ENCODE measurements at regions of chr9 and their contacts with region 1.

Region 1: DNA sequence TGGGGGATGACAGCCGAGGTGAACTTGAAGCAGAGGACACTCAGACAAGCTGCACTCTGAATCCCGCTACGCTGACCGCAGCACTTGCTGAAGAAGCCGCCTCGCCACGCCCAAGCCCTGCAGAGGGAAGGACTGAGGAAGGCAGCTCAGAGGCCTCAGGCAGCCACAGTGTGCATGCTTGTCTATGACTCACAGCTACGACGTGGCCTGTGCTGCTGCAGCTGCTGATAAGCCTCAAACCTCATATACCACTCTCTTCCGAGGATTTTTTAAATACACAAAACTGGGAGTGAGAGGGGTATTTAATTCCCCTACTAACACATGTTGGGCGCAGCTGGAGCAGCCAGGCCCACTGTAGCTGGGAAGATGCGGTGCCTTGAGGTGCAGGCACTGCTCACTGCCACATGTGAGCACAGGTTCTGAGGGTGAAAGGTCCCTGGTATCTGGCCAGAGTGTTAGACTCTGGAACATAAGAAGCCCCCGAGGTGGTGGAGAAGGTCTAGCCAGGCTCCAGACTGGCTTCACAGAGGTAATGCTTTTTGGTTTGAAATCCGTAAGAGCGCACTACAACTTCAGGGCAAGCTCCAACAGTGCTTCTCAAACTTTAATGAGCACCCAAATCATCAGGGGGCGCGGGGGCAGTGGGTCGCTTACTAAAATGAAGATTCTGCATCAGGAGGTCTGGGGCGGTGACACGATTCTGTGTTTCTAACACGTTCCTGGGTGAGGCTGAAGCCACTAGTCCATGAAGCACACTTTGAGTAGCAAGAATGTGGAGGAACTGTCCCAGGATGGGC is 196.8 kb downstream of the AUH start:
- DNase-seq: peak; percentile 81
- H3K4me3 Mint-ChIP-seq: peak overlapping the region; percentile 73
- H3K27ac Mint-ChIP-seq: peak overlapping the region; percentile 90
- H3K4me1 Mint-ChIP-seq: peaks cover 68% of the 10 kb centered on the region
- H3K27me3 Mint-ChIP-seq: peaks cover 8% of the 10 kb centered on the region

Region 2: DNA sequence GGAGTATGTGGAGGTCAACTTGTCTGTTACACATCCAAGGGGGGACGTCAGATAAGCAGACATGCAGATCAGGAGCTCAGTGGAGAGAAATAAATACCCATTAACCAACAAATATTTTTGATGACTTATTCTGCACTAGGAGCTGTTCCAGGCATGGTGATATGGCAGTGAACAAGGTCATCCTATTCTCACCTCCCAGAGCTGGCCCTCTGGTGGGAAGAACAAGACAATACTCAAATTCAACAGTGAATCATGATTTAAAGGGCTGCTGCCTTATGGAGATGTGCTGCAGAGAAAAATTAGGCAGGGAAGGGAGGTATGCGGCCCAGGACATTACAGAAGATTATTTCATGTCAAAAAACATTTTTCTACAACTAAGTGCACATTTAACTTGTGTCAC is 326.8 kb before region 1 on chr9:
- CTCF ChIA-PET with region 1: no interaction called
- DNase-seq: no peak
- H3K4me3 Mint-ChIP-seq: no peak overlapping the region
- H3K27ac Mint-ChIP-seq: no peak overlapping the region
- H3K4me1 Mint-ChIP-seq: no peaks in the 10 kb centered on the region
- H3K27me3 Mint-ChIP-seq: peaks cover 10% of the 10 kb centered on the region

Region 3: DNA sequence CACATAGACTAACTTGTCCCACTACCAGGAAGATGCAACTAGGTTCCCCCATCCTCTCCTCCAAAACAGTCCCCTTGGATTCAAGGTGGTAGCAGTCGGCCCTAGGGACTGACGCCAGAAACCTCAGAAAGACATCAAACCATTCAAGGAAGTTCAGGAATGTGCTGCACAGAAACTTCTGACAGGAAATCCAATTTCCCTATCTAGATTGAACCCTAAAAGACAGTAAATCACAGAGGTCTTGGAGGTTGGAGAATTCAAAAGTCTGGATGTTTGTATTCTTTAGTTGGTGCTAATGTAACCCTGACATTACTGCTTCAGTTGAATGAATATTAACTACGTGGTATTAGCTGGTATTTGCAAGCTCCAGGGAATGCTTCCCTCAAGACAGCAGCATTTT is 238.0 kb before region 1 on chr9:
- CTCF ChIA-PET with region 1: no interaction called
- DNase-seq: no peak
- H3K4me3 Mint-ChIP-seq: no peak overlapping the region
- H3K27ac Mint-ChIP-seq: no peak overlapping the region
- H3K4me1 Mint-ChIP-seq: no peaks in the 10 kb centered on the region
- H3K27me3 Mint-ChIP-seq: peaks cover 38% of the 10 kb centered on the region

Region 4: GRCh38 chr9:91150998-91151717 is 13.8 kb before region 1 on chr9:
- CTCF ChIA-PET with region 1: interaction called, 13 read pairs
- DNase-seq: peak; percentile 56
- H3K4me3 Mint-ChIP-seq: peak overlapping the region; percentile 42
- H3K27ac Mint-ChIP-seq: peak overlapping the region; percentile 88
- H3K4me1 Mint-ChIP-seq: peaks cover 79% of the 10 kb centered on the region
- H3K27me3 Mint-ChIP-seq: peaks cover 8% of the 10 kb centered on the region

Region 5: DNA sequence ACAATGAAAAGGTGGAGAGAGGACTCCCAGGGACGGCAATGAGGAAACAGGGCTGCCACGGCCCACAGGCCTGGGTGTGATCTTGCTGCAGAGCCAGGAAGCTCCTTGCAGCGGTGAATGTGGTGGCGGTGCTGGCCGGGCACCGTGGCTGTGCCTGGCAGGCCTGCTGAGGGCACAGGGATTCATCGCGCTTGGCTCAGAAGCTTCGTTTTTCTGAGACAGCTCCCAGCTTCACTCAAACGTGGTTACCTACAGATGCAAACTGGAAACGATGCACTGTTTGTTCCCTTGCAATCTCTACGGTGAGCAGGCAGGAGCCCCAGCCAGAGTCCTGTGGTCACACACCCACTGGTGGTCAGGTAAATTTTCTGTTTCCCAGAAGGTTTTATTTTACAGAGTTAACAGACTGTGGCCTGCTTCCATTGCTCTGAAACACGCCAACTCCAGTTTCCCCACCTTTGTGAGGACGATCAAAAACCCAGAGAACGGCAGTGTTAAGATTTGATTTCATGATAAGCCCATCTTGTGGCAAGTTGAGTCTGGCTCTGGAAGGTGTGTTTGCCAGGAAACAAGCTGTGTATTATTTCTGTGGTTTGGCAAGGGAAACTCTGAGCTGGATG is 12.8 kb after region 1 on chr9:
- CTCF ChIA-PET with region 1: interaction called, 24 read pairs
- DNase-seq: peak; percentile 54
- H3K4me3 Mint-ChIP-seq: no peak overlapping the region
- H3K27ac Mint-ChIP-seq: peak overlapping the region; percentile 75
- H3K4me1 Mint-ChIP-seq: peaks cover 56% of the 10 kb centered on the region
- H3K27me3 Mint-ChIP-seq: peaks cover 13% of the 10 kb centered on the region